ENCODE measurements at regions of chr5 and their contacts with region 1.

Region 1: DNA sequence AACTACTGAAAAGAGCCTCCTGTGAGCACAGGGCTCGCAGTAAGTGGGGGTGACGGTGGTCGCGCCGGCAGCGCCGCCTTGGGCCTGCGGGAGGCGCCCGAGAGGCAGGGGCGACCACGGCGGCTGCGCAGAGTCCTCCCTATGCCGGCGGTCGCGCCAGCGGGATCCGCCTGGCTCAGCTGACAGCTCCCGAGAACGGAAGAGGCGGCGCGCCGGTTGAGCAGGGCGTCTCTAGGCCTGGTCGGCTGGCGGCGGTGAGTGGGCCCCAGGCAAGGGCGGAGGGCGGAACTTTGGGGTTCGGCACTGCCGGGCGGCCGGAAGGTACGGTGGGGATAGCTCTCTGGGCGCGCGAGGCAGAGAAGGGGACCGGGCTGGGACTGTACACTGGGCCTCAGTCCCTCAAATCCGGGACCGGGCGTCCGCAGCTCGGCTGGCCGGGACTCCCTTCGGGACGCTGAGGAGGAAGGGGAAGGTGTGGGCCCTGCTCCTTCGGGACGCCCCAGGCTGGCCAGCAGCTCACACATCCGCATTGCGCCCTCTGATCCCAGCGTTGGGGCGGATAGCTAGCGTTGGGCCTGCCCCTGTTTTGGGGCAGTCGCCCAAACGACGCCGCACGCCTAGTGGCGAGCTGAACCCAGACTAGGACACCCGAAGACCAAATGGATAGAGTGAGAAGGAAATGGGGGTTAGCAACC is at the start of gene RNF14:
- DNase-seq: peak; percentile 98
- ATAC-seq: peak; percentile 96
- H3K4me3 Mint-ChIP-seq: peak within 1 kb of the TSS; percentile 97
- H3K27ac Mint-ChIP-seq: peak within 1 kb of the TSS; percentile 96
- H3K4me1 Mint-ChIP-seq: peaks cover 30% of the 10 kb centered on the region
- H3K27me3 Mint-ChIP-seq: no peaks in the 10 kb centered on the region
- total RNA-seq, gene RNF14: 35.7 to 38.0 TPM

Region 2: GRCh38 chr5:141320225-141321169 is 648.6 kb before region 1 on chr5 and contains the start of gene TAF7:
- CTCF ChIA-PET with region 1: no interaction called
- POLR2A ChIA-PET with region 1: no interaction called
- intact Hi-C with region 1: loop called in 1 of 2 experiments (anchors 5 kb)
- DNase-seq: peak; percentile 96
- ATAC-seq: peak; percentile 96
- H3K4me3 Mint-ChIP-seq: peak within 1 kb of the TSS; percentile 91
- H3K27ac Mint-ChIP-seq: peak within 1 kb of the TSS; percentile 100
- H3K4me1 Mint-ChIP-seq: peaks cover 23% of the 10 kb centered on the region
- H3K27me3 Mint-ChIP-seq: peaks cover 2% of the 10 kb centered on the region
- total RNA-seq, gene TAF7: 45.2 to 54.4 TPM

Region 3: GRCh38 chr5:141681695-141682641 is 287.1 kb before region 1 on chr5 and contains the start of gene ARAP3:
- CTCF ChIA-PET with region 1: interaction called, 13 read pairs
- POLR2A ChIA-PET with region 1: no interaction called
- intact Hi-C with region 1: no loop called
- DNase-seq: peak; percentile 59
- ATAC-seq: peak; percentile 63
- H3K4me3 Mint-ChIP-seq: peak within 1 kb of the TSS; percentile 60
- H3K27ac Mint-ChIP-seq: peak within 1 kb of the TSS; percentile 62
- H3K4me1 Mint-ChIP-seq: peaks cover 19% of the 10 kb centered on the region
- H3K27me3 Mint-ChIP-seq: peaks cover 3% of the 10 kb centered on the region
- total RNA-seq, gene ARAP3: 3.2 TPM

Region 4: DNA sequence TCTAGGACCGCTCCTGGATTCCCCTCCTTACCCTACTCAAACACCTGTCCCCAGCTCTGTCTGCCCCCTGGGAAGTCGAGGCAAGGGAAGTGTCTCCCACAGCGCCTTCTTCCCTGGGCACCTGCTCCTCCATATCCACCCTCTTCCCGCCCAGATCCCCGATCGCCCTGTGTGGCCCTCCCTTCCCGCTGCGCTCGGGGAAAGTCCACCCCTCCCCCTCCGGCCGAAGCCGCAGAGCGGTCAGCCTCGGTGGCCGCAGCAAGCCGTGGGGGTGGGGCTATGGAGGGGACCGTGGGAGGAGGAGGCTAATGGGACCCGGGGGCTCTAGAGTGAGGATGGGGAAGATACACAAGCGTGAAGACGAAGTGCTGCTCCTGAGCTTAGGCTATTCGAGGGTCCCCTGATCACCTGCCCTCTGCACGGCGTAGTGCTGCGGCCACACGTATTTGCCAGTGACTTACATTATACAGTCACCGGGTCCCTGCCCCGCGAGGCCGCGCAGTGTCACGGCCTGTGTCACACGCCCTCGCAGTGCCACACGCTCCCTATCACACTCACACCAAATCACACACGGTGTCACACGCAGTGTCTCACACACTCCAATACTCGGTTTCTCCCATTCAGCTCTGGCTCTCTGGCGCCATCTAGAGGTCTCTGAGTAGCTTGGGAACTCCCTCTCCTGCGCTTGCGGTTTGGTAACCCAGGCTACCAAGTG is 90.2 kb before region 1 on chr5:
- CTCF ChIA-PET with region 1: interaction called, 5 read pairs
- POLR2A ChIA-PET with region 1: no interaction called
- intact Hi-C with region 1: loop called in 1 of 2 experiments (anchors 5 kb)
- DNase-seq: peak; percentile 93
- ATAC-seq: peak; percentile 90
- H3K4me3 Mint-ChIP-seq: peak overlapping the region; percentile 59
- H3K27ac Mint-ChIP-seq: no peak overlapping the region
- H3K4me1 Mint-ChIP-seq: peaks cover 19% of the 10 kb centered on the region
- H3K27me3 Mint-ChIP-seq: peaks cover 65% of the 10 kb centered on the region

Region 5: DNA sequence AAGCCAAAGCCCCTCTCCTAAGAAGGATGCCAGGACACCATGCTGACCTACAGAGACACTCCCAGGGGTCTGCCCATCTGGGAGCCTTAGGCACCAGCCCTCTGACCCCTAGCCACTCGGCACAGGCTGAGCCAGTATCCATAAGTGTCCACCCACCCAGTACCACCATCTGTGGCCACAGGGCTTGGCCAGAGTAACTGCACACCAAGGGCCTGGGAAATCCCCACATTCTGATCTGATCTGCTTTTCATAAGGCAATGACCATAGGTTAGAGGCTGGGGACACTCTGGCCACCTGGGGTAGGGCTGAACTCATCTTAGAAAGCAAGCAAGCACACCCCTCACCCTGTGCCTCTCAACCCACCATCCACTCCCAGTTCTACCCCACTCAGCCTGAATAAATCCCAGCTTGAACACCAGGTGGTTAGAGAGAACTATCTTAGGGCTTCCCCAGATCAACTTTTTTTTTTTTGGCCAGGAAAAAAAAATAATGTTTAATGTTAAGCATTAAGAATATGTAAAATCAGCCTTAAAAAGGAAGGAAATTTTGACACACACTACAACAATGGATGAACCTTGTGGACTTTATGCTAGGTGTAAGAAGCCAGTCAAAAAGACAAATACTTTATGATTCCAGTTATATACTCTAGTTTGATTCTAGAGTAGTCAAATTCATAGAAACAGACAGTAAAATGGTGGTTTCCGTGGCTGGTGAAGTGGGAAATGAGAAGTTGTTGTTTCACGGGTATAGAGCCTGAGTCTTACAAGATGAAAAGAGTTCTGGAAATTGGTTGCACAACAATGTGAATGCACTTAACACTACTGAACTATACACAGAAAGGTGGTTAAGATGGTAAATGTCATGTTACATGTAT is 37.5 kb after region 1 on chr5:
- CTCF ChIA-PET with region 1: interaction called, 9 read pairs
- POLR2A ChIA-PET with region 1: interaction called, 3 read pairs
- intact Hi-C with region 1: loop called (anchors 2 to 5 kb)
- DNase-seq: peak; percentile 85
- ATAC-seq: peak; percentile 90
- H3K4me3 Mint-ChIP-seq: peak overlapping the region; percentile 31
- H3K27ac Mint-ChIP-seq: peak overlapping the region; percentile 89
- H3K4me1 Mint-ChIP-seq: peaks cover 70% of the 10 kb centered on the region
- H3K27me3 Mint-ChIP-seq: no peaks in the 10 kb centered on the region

Region 6: DNA sequence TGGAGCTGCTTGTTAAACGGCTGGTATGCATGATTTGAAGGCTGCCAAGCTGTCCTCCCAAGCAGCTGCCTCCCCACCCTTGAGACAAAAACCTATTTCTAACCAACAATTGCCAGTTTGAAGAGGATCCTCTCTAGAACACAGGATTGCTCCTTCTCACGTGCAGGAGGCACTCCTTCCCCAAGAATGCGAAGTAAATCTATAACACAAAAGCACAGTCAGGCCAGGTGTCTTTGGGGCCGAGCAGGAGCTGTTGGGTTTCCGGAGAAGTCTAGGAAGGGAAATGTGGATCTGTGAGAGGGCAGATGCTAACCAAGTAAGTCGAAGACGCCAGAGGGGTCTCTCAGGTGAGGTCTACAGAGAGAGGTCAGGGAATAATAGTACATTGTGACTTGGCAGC is 79.2 kb after region 1 on chr5:
- CTCF ChIA-PET with region 1: no interaction called
- POLR2A ChIA-PET with region 1: no interaction called
- intact Hi-C with region 1: no loop called
- DNase-seq: no peak
- ATAC-seq: no peak
- H3K4me3 Mint-ChIP-seq: no peak overlapping the region
- H3K27ac Mint-ChIP-seq: no peak overlapping the region
- H3K4me1 Mint-ChIP-seq: peaks cover 5% of the 10 kb centered on the region
- H3K27me3 Mint-ChIP-seq: no peaks in the 10 kb centered on the region

Region 7: GRCh38 chr5:142324871-142325724 is 356.0 kb after region 1 on chr5 and contains the start of gene SPRY4:
- CTCF ChIA-PET with region 1: interaction called, 4 read pairs
- POLR2A ChIA-PET with region 1: no interaction called
- intact Hi-C with region 1: loop called in 1 of 2 experiments (anchors 1 kb)
- DNase-seq: peak; percentile 95
- ATAC-seq: peak; percentile 89
- H3K4me3 Mint-ChIP-seq: peak within 1 kb of the TSS; percentile 77
- H3K27ac Mint-ChIP-seq: peak within 1 kb of the TSS; percentile 79
- H3K4me1 Mint-ChIP-seq: peaks cover 37% of the 10 kb centered on the region
- H3K27me3 Mint-ChIP-seq: peaks cover 36% of the 10 kb centered on the region
- total RNA-seq, gene SPRY4: 0.93 to 0.98 TPM